Endothelial cell of umbilical vein (primary cell): ENCODE measurements at regions of chr1 and their contacts with region 1.

Region 1: DNA sequence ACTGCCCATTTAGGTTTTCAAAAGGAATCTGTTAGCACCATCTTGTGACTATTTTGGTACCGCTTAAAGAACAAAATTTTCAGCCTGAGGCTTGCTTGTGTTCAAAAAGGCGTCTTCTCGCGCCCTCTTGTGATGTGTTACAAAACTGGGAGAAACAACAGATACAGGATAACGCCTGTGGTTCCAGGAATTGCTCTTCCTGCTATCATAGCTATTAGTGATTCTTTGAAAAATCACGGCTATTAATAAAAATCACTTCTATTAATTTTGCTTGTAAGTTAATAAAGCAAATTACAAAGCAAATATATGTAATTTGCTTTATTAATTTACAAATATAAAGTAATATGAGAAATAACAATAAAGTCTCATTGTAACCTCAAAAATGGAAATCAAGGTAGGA is 82.2 kb upstream of the ABCD3 start:
- DNase-seq: peak; percentile 94
- H3K4me3 ChIP-seq: no peak overlapping the region
- H3K27ac ChIP-seq: no peak overlapping the region
- H3K4me1 ChIP-seq: peaks cover 5% of the 10 kb centered on the region
- H3K27me3 ChIP-seq: peaks cover 4 to 5% of the 10 kb centered on the region in 2 experiments
- CTCF ChIP-seq: peak; percentile 73 to 89
- POLR2A ChIP-seq: no peak

Region 2: DNA sequence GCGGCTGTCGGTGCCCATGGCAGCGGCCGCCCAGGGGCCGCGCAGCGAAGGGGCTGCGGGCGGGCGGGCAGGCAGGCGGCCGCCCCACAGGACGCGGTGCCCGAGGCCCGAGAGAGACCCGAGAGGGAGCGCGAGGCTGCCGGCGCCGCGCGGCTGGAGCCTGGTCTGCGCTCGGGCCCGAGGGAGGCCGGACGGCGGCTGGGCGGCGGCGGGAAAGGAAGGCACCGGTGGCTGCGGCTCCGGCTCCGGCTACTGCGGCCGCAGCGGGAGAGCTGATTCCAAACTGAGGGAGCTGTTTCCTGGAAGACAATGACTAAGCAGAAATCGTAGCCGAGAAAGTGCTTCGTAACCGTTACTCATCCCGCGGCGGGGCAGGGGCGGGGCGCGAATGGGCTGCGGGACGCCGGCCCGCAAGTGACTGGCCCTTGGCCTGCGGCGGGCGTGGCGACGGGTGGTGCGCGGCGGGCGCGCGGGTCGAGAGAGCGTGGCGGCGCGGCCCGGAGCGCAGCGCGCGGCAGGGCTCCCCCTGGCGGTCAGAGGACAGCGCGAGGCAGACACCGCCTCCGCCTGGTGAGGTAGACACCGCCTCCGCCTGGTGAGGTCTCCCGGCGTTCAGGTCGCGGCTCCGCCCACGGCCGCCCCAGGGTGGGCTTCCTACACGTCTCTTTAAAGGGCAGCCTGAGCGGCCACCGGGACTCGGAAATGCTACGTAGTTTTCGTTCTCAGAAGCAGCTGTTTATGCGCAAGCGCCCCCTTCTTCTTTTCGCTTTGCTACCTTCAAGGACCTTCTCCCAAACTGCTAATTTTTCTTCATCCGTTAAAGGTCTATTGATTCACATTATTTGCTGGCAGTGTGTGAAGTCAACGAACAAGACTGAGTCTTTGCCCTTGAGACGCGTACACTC is 426.6 kb before region 1 on chr1 and contains the start of gene GCLM:
- CTCF ChIA-PET with region 1: interaction called, 24 read pairs
- POLR2A ChIA-PET with region 1: no interaction called
- dilution Hi-C with region 1: no loop called
- intact Hi-C with region 1: loop called (anchors 1 kb)
- DNase-seq: peak; percentile 97
- H3K4me3 ChIP-seq: peak within 1 kb of the TSS; percentile 70 to 90 (median 82)
- H3K27ac ChIP-seq: peak within 1 kb of the TSS; percentile 69
- H3K4me1 ChIP-seq: peaks cover 39% of the 10 kb centered on the region
- H3K27me3 ChIP-seq: no peaks in the 10 kb centered on the region
- CTCF ChIP-seq: peak; percentile 86 to 99
- POLR2A ChIP-seq: peak; percentile 63
- total RNA-seq, gene GCLM: 45.6 and 55.9 TPM in 2 replicates

Region 3: GRCh38 chr1:94045465-94046056 is 290.4 kb before region 1 on chr1:
- CTCF ChIA-PET with region 1: interaction called, 1,439 read pairs
- POLR2A ChIA-PET with region 1: interaction called, 4 read pairs
- dilution Hi-C with region 1: no loop called
- intact Hi-C with region 1: loop called (anchors 1 kb)
- DNase-seq: peak; percentile 97
- H3K4me3 ChIP-seq: no peak overlapping the region
- H3K27ac ChIP-seq: peak overlapping the region; percentile 89
- H3K4me1 ChIP-seq: peaks cover 65% of the 10 kb centered on the region
- H3K27me3 ChIP-seq: no peaks in the 10 kb centered on the region
- CTCF ChIP-seq: peak; percentile 66 to 89
- POLR2A ChIP-seq: peak; percentile 80

Region 4: DNA sequence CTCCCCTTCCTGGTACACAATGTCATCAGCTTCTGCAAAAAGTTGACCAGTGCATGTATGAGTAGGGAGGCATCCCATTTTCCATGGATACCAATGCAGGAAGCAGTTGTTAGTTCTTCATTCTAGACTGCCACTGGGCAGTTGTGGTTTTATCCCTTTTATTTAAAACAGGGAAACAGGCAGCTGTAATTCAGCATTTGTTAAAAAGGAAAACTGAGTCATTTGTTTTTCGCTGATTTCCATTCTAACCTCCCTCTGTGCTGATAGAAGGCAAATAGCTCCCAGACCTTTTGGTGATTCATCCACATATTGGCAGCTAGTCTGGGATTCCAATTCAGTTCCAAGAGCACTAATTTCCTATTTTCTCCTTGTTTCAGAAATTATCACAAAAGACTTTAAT is 193.9 kb before region 1 on chr1:
- CTCF ChIA-PET with region 1: interaction called, 10 read pairs
- POLR2A ChIA-PET with region 1: no interaction called
- dilution Hi-C with region 1: no loop called
- intact Hi-C with region 1: no loop called
- DNase-seq: peak; percentile 98
- H3K4me3 ChIP-seq: no peak overlapping the region
- H3K27ac ChIP-seq: peak overlapping the region; percentile 84
- H3K4me1 ChIP-seq: peaks cover 22% of the 10 kb centered on the region
- H3K27me3 ChIP-seq: no peaks in the 10 kb centered on the region
- CTCF ChIP-seq: no peak
- POLR2A ChIP-seq: no peak

Region 5: DNA sequence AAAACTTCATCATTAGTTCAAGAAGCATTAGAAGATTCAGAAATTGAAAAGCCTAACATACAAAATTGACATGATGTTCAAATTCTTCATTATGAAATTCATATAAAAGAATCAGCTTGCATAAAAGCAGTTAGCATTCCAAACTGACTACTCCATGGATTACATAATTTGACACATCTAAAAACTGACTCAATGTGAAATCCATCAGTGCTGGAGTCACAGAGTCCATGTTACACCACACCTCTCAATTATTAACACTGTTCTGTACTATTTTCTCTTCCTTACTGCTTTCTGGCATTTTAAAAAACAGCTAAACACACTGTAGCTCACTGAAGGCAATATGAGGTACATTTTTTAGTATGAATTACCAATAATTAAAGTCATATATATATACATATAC is 126.5 kb before region 1 on chr1:
- CTCF ChIA-PET with region 1: interaction called, 18 read pairs
- POLR2A ChIA-PET with region 1: no interaction called
- dilution Hi-C with region 1: no loop called
- intact Hi-C with region 1: no loop called
- DNase-seq: no peak
- H3K4me3 ChIP-seq: no peak overlapping the region
- H3K27ac ChIP-seq: no peak overlapping the region
- H3K4me1 ChIP-seq: peaks cover 38% of the 10 kb centered on the region
- H3K27me3 ChIP-seq: no peaks in the 10 kb centered on the region
- CTCF ChIP-seq: no peak
- POLR2A ChIP-seq: no peak

Region 6: GRCh38 chr1:94247138-94248094 is 88.5 kb before region 1 on chr1:
- CTCF ChIA-PET with region 1: interaction called, 22 read pairs
- POLR2A ChIA-PET with region 1: interaction called, 6 read pairs
- dilution Hi-C with region 1: no loop called
- intact Hi-C with region 1: no loop called
- DNase-seq: peak; percentile 80
- H3K4me3 ChIP-seq: peak overlapping the region; percentile 58 to 98 (median 75)
- H3K27ac ChIP-seq: peak overlapping the region; percentile 90
- H3K4me1 ChIP-seq: peaks cover 23% of the 10 kb centered on the region
- H3K27me3 ChIP-seq: no peaks in the 10 kb centered on the region
- CTCF ChIP-seq: no peak
- POLR2A ChIP-seq: peak; percentile 95

Region 7: DNA sequence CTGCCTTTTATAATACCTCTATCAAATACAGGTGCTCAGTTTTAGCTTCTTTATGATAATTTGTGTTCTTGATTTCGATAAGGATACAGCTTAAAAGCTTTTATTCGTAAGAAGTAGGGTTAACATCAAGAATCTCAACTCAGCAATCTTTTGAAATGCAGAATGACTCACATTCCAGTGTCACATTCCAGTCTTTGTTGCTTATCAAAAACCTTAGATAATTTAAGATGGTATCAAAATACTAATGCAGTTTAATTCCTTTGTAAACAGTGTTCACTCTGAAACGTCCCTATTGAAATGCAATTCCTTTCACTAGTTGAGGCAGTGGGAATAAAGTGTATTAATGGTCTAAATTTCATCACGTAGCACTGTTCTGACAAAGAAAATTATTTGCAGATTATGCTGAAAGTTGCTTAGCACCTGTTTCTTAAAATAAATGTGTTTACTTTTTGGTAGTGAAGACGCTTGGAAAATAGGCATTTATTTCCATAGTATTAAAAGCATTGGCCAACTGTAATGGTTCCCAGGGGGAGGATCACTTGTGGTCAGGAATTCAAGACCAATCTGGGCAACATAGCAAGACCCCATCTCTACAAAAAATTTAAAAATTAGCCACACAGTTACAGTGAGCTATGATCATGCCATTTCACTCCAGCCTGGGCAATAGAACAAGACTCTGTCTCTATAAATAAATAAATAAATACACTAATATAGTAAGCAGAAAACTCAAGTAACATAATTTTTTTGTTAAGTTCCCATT is 601.1 kb after region 1 on chr1:
- CTCF ChIA-PET with region 1: no interaction called
- POLR2A ChIA-PET with region 1: no interaction called
- dilution Hi-C with region 1: no loop called
- intact Hi-C with region 1: no loop called
- DNase-seq: peak; percentile 65
- H3K4me3 ChIP-seq: no peak overlapping the region
- H3K27ac ChIP-seq: peak overlapping the region; percentile 20
- H3K4me1 ChIP-seq: peaks cover 35% of the 10 kb centered on the region
- H3K27me3 ChIP-seq: no peaks in the 10 kb centered on the region
- CTCF ChIP-seq: no peak
- POLR2A ChIP-seq: no peak